Mammary epithelial cell (primary cell): ENCODE measurements at regions of chr1 and their contacts with region 1.

Region 1: DNA sequence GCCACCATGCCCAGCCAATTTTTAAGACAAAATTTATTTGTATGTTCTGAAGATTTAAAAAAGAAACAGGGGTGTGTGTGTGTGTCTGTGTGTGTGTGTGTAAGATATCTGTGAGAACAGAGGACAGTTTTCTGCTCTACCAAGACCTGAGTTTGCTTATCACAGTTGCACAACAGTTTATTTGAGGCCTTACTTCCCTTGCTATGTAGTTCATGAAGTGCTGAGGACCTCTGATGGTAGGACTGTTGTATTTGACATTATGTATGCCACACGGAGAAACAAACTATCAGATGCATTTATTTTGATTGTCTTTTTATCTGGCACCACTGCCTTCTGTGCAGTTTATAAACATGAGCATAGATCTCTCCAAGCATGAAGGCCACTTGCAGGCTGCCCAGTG is 355.2 kb downstream of the PBX1 start:
- DNase-seq: peak; percentile 2
- H3K4me3 ChIP-seq: no peak overlapping the region
- H3K27ac ChIP-seq: no peak overlapping the region
- H3K4me1 ChIP-seq: no peaks in the 10 kb centered on the region
- H3K27me3 ChIP-seq: no peaks in the 10 kb centered on the region
- CTCF ChIP-seq: peak; percentile 5 to 42

Region 2: GRCh38 chr1:164983023-164983650 is 68.9 kb after region 1 on chr1:
- CTCF ChIA-PET with region 1: no interaction called
- dilution Hi-C with region 1: loop called (anchors 5 kb)
- in situ Hi-C with region 1: no loop called
- intact Hi-C with region 1: no loop called
- DNase-seq: no peak
- H3K4me3 ChIP-seq: no peak overlapping the region
- H3K27ac ChIP-seq: no peak overlapping the region
- H3K4me1 ChIP-seq: no peaks in the 10 kb centered on the region
- H3K27me3 ChIP-seq: no peaks in the 10 kb centered on the region
- CTCF ChIP-seq: no peak